ENCODE measurements at regions of chr11 and their contacts with region 1.

Region 1: DNA sequence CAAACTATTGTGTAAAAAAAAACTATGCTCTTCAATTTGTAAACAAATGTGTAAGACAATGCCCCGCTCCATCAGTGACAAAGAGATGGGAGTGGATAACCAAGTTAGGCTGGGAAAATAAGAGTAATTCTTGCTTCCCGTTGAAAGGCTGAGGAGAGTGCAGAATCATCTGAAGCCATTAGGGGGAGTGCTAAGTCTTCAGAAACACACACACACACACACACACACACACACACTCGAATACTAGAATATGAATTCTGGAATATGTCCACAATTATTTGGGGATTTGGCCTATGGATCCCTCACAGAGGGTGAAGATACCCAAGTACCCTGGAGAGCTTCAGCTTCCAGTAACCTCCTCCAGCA is 27.8 kb upstream of the ROBO3 start:
- DNase-seq: peak; percentile 30
- H3K4me3 ChIP-seq: no peak overlapping the region
- H3K27ac ChIP-seq: no peak overlapping the region
- H3K4me1 ChIP-seq: peaks cover 11% of the 10 kb centered on the region
- H3K27me3 ChIP-seq: peaks cover 49% of the 10 kb centered on the region
- CTCF ChIP-seq: no peak

Region 2: GRCh38 chr11:124644426-124645280 is 192.8 kb before region 1 on chr11:
- intact Hi-C with region 1: loop called (anchors 5 kb)
- DNase-seq: peak; percentile 29
- H3K4me3 ChIP-seq: no peak overlapping the region
- H3K27ac ChIP-seq: no peak overlapping the region
- H3K4me1 ChIP-seq: no peaks in the 10 kb centered on the region
- H3K27me3 ChIP-seq: no peaks in the 10 kb centered on the region
- CTCF ChIP-seq: peak; percentile 83

Region 3: GRCh38 chr11:124763156-124763947 is 74.1 kb before region 1 on chr11:
- intact Hi-C with region 1: loop called (anchors 10 kb)
- DNase-seq: peak; percentile 94
- H3K4me3 ChIP-seq: peak overlapping the region; percentile 59
- H3K27ac ChIP-seq: peak overlapping the region; percentile 77
- H3K4me1 ChIP-seq: peaks cover 7% of the 10 kb centered on the region
- H3K27me3 ChIP-seq: peaks cover 19% of the 10 kb centered on the region
- CTCF ChIP-seq: peak; percentile 80

Region 4: DNA sequence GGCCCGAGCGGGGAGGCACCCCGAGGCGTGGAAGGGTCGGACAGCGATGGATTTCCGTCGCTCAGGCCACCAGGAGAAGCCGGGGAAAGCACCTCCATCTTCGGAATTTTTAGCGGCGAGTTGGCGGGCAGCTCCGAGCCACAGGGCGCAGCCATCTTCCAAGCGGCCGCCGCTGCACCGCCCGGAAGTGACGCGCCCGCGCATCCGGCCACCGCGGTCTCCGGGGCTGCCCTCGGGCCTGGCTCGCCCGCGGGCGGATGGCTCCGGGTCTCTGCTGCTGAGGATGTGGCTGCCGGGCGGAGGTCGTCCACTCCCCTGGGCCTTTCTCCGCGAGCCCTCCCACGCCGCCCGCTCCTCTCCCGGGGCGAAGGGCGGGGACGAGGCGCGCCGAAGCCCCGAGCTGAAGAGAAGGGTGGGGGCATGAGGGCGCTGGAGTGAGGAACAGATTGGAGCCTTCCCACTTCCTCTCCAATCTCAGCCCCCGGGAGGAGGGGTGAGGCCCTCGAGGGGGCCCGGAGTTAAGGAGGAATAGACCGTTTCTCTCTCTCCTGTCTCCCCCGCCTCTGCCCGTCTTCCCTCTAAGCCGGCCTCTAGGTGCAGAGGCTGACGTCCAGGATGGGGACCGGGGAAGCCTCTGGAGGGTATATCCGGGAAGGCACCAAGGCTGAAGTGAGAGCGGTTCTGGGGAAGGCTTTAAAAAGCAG is 37.1 kb before region 1 on chr11 and contains the start of gene MSANTD2:
- intact Hi-C with region 1: loop called (anchors 5 kb)
- DNase-seq: peak; percentile 81
- H3K4me3 ChIP-seq: peak within 1 kb of the TSS; percentile 89
- H3K27ac ChIP-seq: peak within 1 kb of the TSS; percentile 93
- H3K4me1 ChIP-seq: peaks cover 10% of the 10 kb centered on the region
- H3K27me3 ChIP-seq: no peaks in the 10 kb centered on the region
- CTCF ChIP-seq: no peak
- total RNA-seq, gene MSANTD2: 7.0 to 12.7 TPM

Measured in colonic mucosa (tissue), 4 donors.